Activated naive CD4-positive, alpha-beta T cell treated with anti-CD3 and anti-CD28 coated beads, Interleukin-2, amount 10 ng/mL, durations not matched to agents 7 days and 5 days (primary cell): ENCODE measurements at regions of chr15 and their contacts with region 1.

Region 1: DNA sequence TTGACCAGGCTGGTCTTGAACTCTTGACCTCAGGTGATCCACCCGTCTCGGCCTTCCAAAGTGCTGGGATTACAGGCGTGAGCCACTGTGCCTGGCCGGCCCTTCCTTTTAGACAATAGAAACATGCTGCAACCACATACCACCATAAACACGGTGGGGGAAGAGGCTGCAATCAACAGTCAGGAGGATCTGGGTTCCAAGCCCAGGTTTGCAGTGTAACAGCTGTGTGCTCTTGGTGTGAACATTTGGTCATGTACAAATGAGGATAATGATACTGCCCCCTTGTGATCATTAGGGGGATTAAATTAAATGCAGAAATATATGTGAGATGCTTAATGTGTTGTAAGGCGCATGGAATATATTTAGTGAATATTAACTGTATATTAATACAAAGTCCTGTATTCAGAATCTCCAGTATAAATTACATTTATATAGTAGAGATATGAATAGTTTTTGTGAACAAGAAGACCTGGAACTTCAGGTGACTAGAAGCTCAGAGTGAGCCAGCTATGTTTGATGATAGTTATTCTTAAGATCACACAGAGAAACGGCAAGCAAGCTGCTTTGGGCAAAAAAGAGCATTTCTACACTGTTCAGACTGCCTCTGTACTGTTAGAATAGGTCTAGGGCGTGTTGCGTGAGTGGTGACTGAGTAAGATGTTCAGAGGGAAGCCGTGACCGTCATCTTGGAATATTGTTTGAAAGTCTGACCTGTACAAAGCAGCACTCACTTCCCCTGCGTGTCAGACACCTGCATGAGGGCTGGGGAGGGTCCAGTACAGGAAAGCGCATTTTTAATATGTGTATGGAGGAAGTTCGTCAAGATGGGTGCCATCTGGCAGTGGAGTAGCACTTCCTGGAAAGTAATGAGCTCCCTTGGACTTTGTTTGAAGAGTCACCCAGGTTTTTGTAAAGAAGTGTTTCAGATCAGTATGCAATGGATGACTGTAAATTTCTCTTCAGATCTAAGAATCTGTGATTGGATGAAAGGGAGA is 125.8 kb downstream of the PGPEP1L start:
- DNase-seq: peak; percentile 27
- H3K4me3 Mint-ChIP-seq: no peak overlapping the region
- H3K27ac Mint-ChIP-seq: no peak overlapping the region
- H3K4me1 Mint-ChIP-seq: peaks cover 7% of the 10 kb centered on the region
- H3K27me3 Mint-ChIP-seq: no peaks in the 10 kb centered on the region

Region 2: GRCh38 chr15:98858610-98859023 is 23.2 kb before region 1 on chr15:
- CTCF ChIA-PET with region 1: interaction called, 12 read pairs
- DNase-seq: no peak
- H3K4me3 Mint-ChIP-seq: peak overlapping the region; percentile 9
- H3K27ac Mint-ChIP-seq: peak overlapping the region; percentile 58
- H3K4me1 Mint-ChIP-seq: peaks cover 55% of the 10 kb centered on the region
- H3K27me3 Mint-ChIP-seq: no peaks in the 10 kb centered on the region

Region 3: DNA sequence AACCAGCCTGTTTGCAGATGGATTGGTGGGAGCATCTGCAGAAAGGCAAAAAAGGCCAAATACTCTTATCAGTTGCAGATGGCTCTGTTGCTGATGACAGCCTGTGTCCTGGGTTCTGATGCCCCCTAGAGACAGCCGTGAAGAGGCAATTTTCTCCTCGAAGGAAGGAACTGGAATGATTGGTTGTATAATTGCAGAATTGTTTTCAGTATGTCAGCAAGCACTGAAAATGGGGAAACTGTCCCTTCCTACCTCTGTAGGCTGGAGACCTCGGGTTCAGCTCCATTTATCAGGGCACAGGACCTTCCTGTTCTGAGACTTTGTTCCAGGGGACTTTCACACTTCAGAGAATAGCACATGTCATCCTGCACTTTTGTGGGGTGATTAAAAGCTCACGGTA is 22.7 kb after region 1 on chr15:
- CTCF ChIA-PET with region 1: interaction called, 10 read pairs
- DNase-seq: no peak
- H3K4me3 Mint-ChIP-seq: no peak overlapping the region
- H3K27ac Mint-ChIP-seq: no peak overlapping the region
- H3K4me1 Mint-ChIP-seq: peaks cover 5% of the 10 kb centered on the region
- H3K27me3 Mint-ChIP-seq: no peaks in the 10 kb centered on the region